ENCODE measurements at regions of chr4 and their contacts with region 1.

Region 1: GRCh38 chr4:145545538-145546174 is 64.0 kb downstream of the SMAD1 start:
- DNase-seq: peak in 1 of 2 donors; percentile 34
- ATAC-seq: peak in 7 of 8 donors; percentile 61 to 81 (median 75)
- H3K4me3 ChIP-seq: no peak overlapping the region
- H3K27ac ChIP-seq: peak overlapping the region in 7 of 10 donors; percentile 9 to 63 (median 31)
- H3K4me1 ChIP-seq: peaks cover 0 to 51% (median 24%) of the 10 kb centered on the region in 9 donors
- H3K27me3 ChIP-seq: no peaks in the 10 kb centered on the region
- CTCF ChIP-seq: no peak

Region 2: DNA sequence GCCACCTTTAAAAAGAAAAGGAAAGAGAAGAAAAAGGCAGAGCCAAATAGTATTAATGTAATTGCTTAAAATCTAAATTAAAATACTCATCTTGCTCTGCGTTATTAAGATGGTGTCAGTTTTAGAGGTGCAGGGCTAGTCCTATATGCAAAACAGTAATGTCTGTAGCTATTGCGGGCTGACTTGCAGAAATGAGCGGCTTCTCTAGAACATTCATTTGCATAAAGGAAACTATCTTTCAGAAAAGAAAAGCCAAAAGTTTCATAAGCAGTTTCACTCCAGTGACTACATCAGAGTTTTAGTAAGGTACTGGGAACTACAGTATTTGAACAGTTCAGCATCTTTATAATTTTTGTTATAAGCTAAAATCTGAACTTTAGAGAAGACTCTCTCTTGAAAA is 58.0 kb before region 1 on chr4:
- intact Hi-C with region 1: loop called in 4 of 10 experiments (anchors 5 to 10 kb)
- DNase-seq: no peak
- ATAC-seq: peak in 1 of 8 donors; percentile 7
- H3K4me3 ChIP-seq: no peak overlapping the region
- H3K27ac ChIP-seq: no peak overlapping the region
- H3K4me1 ChIP-seq: peaks cover 0 to 91% (median 58%) of the 10 kb centered on the region in 9 donors
- H3K27me3 ChIP-seq: no peaks in the 10 kb centered on the region
- CTCF ChIP-seq: no peak

Region 3: DNA sequence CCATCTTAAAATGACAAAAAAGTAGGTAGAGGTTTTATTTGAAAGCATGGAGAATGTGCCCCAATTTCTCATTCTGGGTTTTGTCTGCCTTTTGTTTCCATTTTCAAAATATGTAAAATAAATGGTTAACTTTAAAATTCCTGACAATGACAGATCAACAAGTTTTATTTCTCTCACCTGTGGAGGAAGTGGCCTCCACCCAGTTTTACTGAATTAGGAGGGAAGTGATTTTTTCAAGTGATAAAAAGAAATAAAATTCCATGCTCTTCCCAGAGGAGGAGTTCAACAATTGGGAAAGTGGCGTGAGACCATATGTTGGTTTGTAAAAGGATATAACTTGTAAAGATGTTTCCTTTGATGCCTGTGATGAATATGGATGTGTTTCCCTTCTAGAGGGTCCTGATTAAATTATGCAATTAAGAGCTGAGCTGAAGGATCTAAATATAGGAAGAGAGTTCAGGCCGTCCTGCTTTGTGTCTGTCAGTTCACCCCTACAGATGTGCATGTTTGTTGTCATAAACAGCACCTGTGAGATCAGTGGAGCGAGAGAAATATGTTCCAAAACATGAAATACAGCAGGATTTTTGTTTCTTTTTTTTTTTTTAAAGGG is 44.5 kb before region 1 on chr4:
- intact Hi-C with region 1: loop called in 1 of 10 experiments (anchors 5 kb)
- DNase-seq: no peak
- ATAC-seq: peak; percentile 40 to 87 (median 80)
- H3K4me3 ChIP-seq: no peak overlapping the region
- H3K27ac ChIP-seq: peak overlapping the region in 7 of 10 donors; percentile 17 to 71 (median 51)
- H3K4me1 ChIP-seq: peaks cover 0 to 78% (median 56%) of the 10 kb centered on the region in 9 donors
- H3K27me3 ChIP-seq: no peaks in the 10 kb centered on the region
- CTCF ChIP-seq: no peak

Region 4: DNA sequence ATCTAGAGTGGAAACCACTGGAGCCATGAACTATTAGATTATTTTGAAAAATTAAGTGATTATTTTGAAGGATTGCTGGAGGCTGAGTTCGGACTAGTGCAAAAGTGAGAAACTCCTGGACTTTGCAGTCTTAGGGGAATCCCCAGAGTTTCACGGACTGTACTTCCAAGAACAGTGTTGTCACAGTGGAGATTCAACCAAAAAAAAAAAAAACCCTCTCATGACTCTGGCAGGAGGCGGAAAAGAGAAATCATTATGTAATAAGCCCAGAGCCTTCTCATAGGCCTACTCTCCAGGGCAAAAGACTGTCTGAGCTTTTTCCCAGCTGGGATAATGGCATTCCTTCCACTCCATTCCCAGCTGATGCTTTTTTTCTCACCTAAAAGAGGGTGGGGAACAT is 117.5 kb after region 1 on chr4:
- intact Hi-C with region 1: no loop called
- DNase-seq: peak in 1 of 2 donors; percentile 4
- ATAC-seq: peak in 7 of 8 donors; percentile 72 to 96 (median 88)
- H3K4me3 ChIP-seq: no peak overlapping the region
- H3K27ac ChIP-seq: peak overlapping the region in 4 of 10 donors; percentile 4 to 56 (median 31)
- H3K4me1 ChIP-seq: no peaks in the 10 kb centered on the region
- H3K27me3 ChIP-seq: no peaks in the 10 kb centered on the region
- CTCF ChIP-seq: no peak

Measured in heart right ventricle (tissue), 16 donors.